AG04449 (cell line): ENCODE measurements at regions of chr2 and their contacts with region 1.

Region 1: DNA sequence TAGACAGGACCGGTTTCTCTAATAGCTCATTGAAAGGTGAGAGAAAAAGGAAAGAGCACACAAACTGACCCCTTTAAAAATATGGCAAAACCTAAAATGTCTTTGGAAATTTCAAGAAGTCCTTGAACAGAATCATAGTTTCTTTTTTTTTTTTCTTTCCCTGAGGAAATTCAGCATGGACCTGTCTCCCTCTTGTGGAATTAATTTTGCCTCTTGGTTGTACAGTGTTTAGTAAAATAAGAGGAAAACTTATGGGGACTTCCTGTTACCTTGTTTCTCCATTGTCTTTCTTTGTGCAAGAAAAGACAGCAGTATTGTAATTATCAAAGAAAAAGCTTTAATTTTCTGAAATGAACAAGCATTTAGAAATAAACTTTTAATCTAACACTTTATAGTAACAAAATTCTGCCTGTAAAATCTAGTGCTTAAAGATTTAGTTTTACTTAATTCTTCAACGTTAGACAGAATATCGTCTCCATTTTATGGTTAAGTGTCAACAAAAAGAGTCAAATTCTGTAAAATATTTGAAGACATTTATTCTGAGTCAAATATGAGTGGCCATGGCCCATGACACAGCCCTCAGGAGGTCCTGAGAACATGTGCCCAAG is 176.3 kb upstream of the NABP1 start:
- DNase-seq: no peak
- H3K4me3 ChIP-seq: no peak overlapping the region
- CTCF ChIP-seq: peak; percentile 34

Region 2: GRCh38 chr2:191165176-191165643 is 336.5 kb before region 1 on chr2:
- CTCF ChIA-PET with region 1: interaction called, 209 read pairs
- POLR2A ChIA-PET with region 1: interaction called, 3 read pairs
- DNase-seq: no peak
- H3K4me3 ChIP-seq: no peak overlapping the region
- CTCF ChIP-seq: peak; percentile 49

Region 3: GRCh38 chr2:191245046-191245868 is 256.4 kb before region 1 on chr2 and contains the start of gene MYO1B:
- CTCF ChIA-PET with region 1: interaction called, 43 read pairs
- POLR2A ChIA-PET with region 1: no interaction called
- DNase-seq: no peak
- H3K4me3 ChIP-seq: peak within 1 kb of the TSS; percentile 93
- CTCF ChIP-seq: peak; percentile 68

Region 4: DNA sequence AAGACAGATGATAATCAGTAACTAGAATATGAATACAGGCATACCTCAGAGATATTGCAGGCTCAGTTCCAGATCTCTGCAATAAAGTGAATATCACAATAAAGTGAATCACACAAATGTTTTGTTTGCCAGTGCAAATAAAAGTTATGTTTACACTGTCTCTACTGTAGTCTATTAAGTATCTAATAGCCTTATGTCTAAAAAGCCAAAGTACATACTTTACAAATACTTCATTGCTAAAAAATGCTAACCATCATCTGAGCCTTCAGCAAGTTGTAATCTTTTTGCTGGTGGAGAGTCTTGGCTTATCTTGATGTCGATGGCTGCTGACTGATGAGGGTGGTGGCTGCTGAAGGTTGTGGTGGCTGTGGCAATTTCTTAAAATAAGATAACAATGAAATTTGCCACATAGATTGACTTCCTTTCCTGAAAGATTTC is 97.1 kb before region 1 on chr2:
- CTCF ChIA-PET with region 1: interaction called, 23 read pairs
- POLR2A ChIA-PET with region 1: no interaction called
- DNase-seq: peak; percentile 33
- H3K4me3 ChIP-seq: no peak overlapping the region
- CTCF ChIP-seq: no peak

Region 5: GRCh38 chr2:191515551-191515950 is 13.9 kb after region 1 on chr2:
- CTCF ChIA-PET with region 1: interaction called, 60 read pairs
- POLR2A ChIA-PET with region 1: no interaction called
- DNase-seq: no peak
- H3K4me3 ChIP-seq: no peak overlapping the region
- CTCF ChIP-seq: no peak

Region 6: DNA sequence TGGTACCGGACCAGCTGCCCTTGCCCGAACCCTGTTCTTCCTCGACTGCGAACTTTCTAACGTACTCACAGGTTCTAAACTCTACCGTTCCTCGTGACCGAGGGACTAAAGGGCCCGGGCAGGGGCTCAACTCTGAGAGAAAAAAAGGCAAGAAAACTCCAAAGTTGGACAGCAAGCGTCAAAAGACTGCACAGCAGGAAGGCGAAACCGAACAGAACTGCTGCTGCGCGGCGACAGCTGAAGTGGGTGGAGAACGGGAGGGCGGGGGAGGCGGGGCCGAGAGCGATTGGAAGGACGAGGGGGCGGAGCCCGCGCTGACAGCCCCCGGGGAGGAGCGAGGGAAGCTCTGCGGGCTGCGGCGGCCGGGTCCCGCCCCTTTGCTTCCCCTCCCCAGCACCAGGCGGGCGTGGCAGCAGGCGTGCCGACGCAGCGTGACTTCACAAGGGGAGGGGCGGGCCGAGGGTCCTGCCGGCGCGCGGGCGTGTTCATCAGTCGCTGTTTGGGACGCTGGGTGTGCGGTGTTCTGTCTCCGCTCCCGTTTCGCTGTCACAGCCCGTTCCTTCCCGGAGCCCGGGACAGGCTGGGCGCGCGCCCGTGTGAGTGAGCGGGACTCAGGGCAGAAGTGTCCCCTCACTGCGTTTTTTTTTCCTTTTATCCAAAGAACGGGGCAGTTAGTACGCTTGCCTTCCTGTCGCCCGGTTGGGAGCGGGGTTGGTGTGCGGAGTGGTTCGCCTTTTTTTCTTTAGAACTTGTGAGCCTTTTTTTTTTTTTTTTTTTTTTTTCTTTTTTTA is 176.2 kb after region 1 on chr2 and contains the start of gene NABP1:
- CTCF ChIA-PET with region 1: no interaction called
- POLR2A ChIA-PET with region 1: no interaction called
- DNase-seq: peak; percentile 83
- H3K4me3 ChIP-seq: peak within 1 kb of the TSS; percentile 85
- CTCF ChIP-seq: no peak